ENCODE measurements at regions of chr9 and their contacts with region 1.

Region 1: DNA sequence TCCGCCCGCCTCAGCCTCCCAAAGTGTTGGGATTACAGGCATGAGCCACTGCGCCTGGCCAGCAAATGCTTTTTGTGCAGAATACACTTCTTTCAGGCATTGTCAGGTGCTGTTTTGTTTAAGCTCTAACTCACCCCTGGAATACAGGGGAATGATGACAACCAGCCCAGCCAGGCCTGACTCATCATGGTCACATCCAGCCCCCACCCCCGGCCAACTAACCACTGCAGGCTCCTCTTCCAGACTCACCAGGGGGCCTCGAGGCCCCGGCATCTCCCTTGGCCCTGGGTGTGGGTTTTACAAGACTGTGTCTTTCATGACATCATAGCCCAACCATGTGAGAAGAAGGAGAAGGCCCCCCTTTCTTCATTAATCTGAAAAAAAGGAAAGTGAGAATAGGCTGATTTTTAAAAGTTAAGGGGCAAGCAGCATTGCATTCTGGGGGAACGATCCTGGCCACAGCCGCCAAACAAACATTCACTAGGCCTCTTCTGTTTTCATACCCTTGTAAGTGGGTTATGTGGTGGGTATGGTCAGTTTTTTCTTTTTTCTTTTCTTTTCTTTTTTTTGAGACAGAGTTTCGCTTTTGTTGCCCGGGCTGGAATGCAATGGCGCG is 35.6 kb downstream of the OLFML2A start:
- DNase-seq: peak; percentile 88
- H3K4me3 Mint-ChIP-seq: no peak overlapping the region
- H3K27ac Mint-ChIP-seq: peak overlapping the region; percentile 46
- H3K4me1 Mint-ChIP-seq: peaks cover 31% of the 10 kb centered on the region
- H3K27me3 Mint-ChIP-seq: no peaks in the 10 kb centered on the region
- CTCF ChIP-seq: no peak

Region 2: DNA sequence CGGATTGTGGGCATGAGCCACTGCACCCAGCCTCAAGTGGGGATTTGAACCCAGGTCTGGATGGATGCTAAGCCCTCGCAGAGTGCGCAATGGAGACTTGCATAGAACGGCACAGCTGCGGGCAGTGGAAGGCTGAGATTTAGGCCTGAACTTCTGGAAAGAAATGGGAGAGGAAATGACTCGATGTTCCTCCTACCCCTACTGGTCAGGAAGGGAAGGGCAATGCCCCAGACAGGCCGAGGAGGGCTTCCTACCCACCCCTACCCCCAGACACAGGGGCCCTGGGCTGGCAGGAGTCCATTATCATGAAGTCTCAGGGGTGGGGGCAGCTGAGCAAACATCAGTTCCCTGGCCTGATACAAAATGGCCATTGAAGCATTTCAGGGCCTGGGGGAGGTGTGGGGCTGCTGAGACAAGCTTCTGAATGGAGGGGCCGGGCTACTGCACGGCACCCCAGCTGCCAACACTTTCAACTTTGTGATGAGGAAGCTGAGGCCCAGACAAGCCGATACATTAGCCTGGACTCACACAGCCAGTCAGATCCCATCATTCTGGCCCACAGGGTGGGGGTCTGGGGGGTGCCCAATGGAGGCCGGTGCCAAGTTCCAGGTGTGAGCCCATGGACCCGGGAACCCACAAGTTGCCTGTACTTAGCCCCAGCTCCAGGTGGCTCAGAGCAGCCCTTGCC is 27.2 kb after region 1 on chr9:
- CTCF ChIA-PET with region 1: interaction called, 17 read pairs
- POLR2A ChIA-PET with region 1: interaction called, 83 read pairs
- intact Hi-C with region 1: no loop called
- DNase-seq: no peak
- H3K4me3 Mint-ChIP-seq: no peak overlapping the region
- H3K27ac Mint-ChIP-seq: no peak overlapping the region
- H3K4me1 Mint-ChIP-seq: peaks cover 11% of the 10 kb centered on the region
- H3K27me3 Mint-ChIP-seq: no peaks in the 10 kb centered on the region
- CTCF ChIP-seq: peak; percentile 27